ENCODE measurements at regions of chr1 and their contacts with region 1.

Region 1: DNA sequence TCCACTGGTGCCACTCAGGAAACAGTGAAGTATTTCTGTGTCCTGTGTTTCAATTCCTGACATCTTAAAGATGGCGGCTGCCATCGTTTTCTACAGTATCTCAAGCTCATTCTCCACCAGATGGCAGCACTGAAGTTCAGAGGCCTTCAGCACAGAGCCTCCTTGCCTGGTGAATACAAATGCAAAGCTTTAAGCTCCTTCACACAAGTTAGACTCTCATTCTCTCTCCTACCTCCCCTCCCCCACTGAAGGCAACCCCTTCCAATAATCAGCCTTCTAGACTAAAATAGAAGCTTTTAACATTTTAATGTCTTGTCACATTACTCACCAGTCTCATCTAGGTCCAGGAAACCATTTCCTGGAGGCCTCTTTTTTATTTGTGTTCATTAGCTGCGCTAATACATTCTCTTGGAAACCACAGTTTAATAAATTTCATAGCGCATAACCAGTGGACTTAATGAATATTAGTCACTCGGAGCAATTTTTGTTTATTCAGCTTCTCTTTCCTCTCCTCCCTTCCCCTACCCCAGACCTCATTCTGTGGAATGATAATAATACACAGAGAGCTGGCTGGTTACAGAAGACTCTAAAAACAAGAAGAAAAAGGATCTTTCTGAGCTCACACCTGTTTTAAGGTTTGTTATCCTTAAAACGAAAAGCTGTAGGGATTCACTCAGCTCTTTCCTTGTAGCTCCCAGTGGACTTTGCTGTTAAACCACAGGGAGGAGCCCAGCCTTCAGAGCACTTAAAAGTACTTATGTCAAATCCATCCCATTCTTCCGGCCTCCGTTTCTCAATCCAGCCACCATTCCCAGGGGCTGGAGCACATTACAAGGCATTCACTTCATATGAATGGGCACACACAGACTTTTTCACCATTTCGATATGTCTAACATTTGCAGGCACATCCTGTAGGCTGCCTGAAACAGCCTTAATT is 384.9 kb downstream of the HLX start:
- DNase-seq: no peak
- H3K4me3 ChIP-seq: no peak overlapping the region
- H3K27ac ChIP-seq: peak overlapping the region in 7 of 8 donors; percentile 36 to 68 (median 64)
- H3K4me1 ChIP-seq: peaks cover 0 to 9% (median 2%) of the 10 kb centered on the region in 6 donors
- H3K27me3 ChIP-seq: peaks cover 0 to 5% (median 0%) of the 10 kb centered on the region in 7 donors
- CTCF ChIP-seq: peak; percentile 6 to 75 (median 67)
- POLR2A ChIP-seq: no peak

Region 2: GRCh38 chr1:221078260-221078965 is 185.7 kb before region 1 on chr1:
- intact Hi-C with region 1: no loop called
- DNase-seq: no peak
- H3K4me3 ChIP-seq: no peak overlapping the region
- H3K27ac ChIP-seq: no peak overlapping the region
- H3K4me1 ChIP-seq: peaks cover 0 to 27% (median 16%) of the 10 kb centered on the region in 6 donors
- H3K27me3 ChIP-seq: no peaks in the 10 kb centered on the region
- CTCF ChIP-seq: no peak
- POLR2A ChIP-seq: no peak

Region 3: DNA sequence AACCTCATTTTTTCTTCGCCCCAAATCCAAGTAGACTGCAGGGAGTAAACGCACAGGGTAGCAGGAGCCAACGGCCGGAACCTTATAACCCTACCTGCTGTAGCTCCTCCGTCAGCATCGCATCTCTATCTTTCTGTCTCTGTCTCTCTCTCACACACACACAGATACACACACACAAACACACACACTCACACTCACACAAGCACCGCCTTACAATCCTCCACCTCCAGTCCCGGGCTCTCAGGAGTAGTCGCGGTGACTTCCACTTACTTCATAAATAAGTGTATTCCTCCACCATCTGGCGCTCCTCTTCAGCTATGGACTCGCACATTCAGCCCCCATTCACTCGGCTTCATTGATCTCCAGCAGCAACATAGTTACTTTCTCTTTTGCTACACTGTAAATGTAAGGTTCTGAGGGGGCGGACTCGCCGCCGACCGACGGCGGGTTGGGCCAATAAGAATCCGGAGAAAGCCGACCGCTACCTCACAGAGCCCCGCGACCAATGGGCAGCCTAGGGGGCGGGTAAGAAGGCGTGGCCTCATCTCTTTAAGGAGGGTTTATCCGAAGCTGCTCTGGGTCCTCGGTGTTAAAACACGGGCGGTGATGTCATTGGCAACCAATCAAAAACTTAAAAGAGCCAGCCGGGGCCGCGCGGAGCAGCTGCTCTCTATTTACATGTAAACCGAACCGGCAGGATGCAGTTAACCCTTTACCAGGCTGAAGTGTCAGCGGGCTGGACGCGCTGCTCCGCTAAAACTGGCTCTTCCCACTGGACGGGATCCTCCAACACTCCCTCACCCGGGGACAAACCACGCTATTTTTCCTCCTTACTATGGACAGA is 477.8 kb after region 1 on chr1 and contains the start of gene DUSP10:
- intact Hi-C with region 1: loop called (anchors 10 kb)
- DNase-seq: peak; percentile 98
- H3K4me3 ChIP-seq: peak within 1 kb of the TSS; percentile 54 to 77 (median 64)
- H3K27ac ChIP-seq: peak within 1 kb of the TSS; percentile 92 to 100 (median 98)
- H3K4me1 ChIP-seq: peaks cover 12 to 55% (median 31%) of the 10 kb centered on the region in 6 donors
- H3K27me3 ChIP-seq: no peaks in the 10 kb centered on the region
- CTCF ChIP-seq: no peak
- POLR2A ChIP-seq: peak; percentile 85 to 99 (median 91)
- total RNA-seq, gene DUSP10: 6.6 to 11.9 (median 7.6) TPM

Measured in spleen (tissue), 13 donors.